Aorta (tissue), 5 donors: ENCODE measurements at regions of chr19 and their contacts with region 1.

Region 1: GRCh38 chr19:48582168-48582567 is 24.4 kb upstream of the SPACA4 start:
- DNase-seq: no peak
- ATAC-seq: no peak
- H3K4me3 ChIP-seq: no peak overlapping the region
- H3K27ac ChIP-seq: no peak overlapping the region
- H3K4me1 ChIP-seq: no peaks in the 10 kb centered on the region
- H3K27me3 ChIP-seq: no peaks in the 10 kb centered on the region

Region 2: DNA sequence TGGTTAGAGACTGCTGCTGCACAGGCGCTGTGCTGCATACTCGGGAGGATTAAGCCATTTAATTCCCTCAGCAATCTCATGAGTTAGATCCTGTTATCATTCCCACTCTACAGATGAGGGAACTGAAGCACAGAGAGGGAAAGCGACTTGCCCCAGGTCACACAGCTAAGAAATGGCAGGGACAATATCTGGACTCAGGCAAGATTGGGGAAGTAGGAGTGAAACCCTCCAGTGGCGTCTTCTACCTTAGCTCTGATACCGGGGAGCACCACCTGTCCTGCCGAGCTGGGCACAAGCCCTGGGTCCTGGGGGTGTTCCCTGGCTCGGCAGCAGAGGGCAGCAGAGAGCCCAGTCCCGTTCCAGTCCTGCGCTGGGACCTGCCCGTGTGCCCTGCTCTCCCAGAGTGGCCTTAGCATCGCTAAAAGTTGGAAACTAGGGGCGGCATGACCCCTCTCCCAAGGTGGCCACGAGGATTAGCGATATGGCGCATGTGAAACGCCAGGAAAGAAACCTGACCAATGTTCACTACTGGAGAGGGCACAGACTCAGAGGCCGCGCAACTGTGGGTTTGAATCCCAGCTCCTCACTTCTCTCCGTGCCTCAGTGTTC is 92.5 kb before region 1 on chr19:
- intact Hi-C with region 1: loop called (anchors 2 kb)
- DNase-seq: peak; percentile 82 to 93
- ATAC-seq: no peak
- H3K4me3 ChIP-seq: no peak overlapping the region
- H3K27ac ChIP-seq: no peak overlapping the region
- H3K4me1 ChIP-seq: no peaks in the 10 kb centered on the region
- H3K27me3 ChIP-seq: no peaks in the 10 kb centered on the region

Region 3: DNA sequence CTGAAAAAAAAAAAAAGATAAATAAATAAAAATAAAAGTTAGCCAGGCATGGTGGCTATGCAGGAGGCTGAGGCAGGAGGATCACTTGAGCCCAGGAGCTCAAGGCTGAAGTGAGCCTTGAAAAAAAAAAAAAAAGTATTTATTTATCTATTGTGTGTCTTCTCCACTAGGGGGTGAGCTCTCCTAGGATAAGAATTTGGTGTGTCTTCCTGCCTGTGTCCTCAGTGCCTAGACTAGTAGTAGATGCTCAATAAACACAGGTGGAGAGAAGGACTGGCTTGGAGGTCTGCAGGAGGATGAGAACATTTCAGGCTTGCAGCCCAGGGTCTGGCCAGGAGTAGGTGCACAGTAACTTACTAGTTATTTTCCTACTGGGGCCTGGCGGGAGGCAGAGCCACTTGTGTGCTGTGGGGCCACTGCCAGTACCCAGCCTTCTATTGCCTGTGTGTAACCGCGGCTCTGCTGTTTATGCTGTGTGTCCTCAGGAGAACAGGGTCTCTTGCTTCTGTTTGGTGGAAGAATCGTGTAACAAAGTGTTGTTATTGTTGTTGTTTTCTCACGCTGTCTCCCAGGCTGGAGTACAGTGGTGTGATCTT is 75.9 kb before region 1 on chr19:
- intact Hi-C with region 1: loop called (anchors 5 kb)
- DNase-seq: no peak
- ATAC-seq: no peak
- H3K4me3 ChIP-seq: no peak overlapping the region
- H3K27ac ChIP-seq: no peak overlapping the region
- H3K4me1 ChIP-seq: no peaks in the 10 kb centered on the region
- H3K27me3 ChIP-seq: no peaks in the 10 kb centered on the region

Region 4: GRCh38 chr19:48513289-48514122 is 68.7 kb before region 1 on chr19:
- intact Hi-C with region 1: loop called (anchors 5 kb)
- DNase-seq: peak in 1 of 2 donors; percentile 84
- ATAC-seq: peak; percentile 65
- H3K4me3 ChIP-seq: peak overlapping the region; percentile 22 to 29
- H3K27ac ChIP-seq: no peak overlapping the region
- H3K4me1 ChIP-seq: no peaks in the 10 kb centered on the region
- H3K27me3 ChIP-seq: no peaks in the 10 kb centered on the region

Region 5: GRCh38 chr19:48543121-48544056 is 38.8 kb before region 1 on chr19:
- intact Hi-C with region 1: no loop called
- DNase-seq: no peak
- ATAC-seq: no peak
- H3K4me3 ChIP-seq: no peak overlapping the region
- H3K27ac ChIP-seq: no peak overlapping the region
- H3K4me1 ChIP-seq: no peaks in the 10 kb centered on the region
- H3K27me3 ChIP-seq: no peaks in the 10 kb centered on the region